Activated B cell treated with CpG ODN at 0.5 μM for 24 hours (primary cell): ENCODE measurements at regions of chr1 and their contacts with region 1.

Region 1: GRCh38 chr1:25074351-25075227 is 144.5 kb upstream of the RUNX3 start:
- DNase-seq: no peak
- ATAC-seq: no peak
- H3K4me3 Mint-ChIP-seq: no peak overlapping the region
- H3K27ac Mint-ChIP-seq: no peak overlapping the region
- H3K4me1 Mint-ChIP-seq: no peaks in the 10 kb centered on the region
- H3K27me3 Mint-ChIP-seq: no peaks in the 10 kb centered on the region
- CTCF ChIP-seq: no peak

Region 2: DNA sequence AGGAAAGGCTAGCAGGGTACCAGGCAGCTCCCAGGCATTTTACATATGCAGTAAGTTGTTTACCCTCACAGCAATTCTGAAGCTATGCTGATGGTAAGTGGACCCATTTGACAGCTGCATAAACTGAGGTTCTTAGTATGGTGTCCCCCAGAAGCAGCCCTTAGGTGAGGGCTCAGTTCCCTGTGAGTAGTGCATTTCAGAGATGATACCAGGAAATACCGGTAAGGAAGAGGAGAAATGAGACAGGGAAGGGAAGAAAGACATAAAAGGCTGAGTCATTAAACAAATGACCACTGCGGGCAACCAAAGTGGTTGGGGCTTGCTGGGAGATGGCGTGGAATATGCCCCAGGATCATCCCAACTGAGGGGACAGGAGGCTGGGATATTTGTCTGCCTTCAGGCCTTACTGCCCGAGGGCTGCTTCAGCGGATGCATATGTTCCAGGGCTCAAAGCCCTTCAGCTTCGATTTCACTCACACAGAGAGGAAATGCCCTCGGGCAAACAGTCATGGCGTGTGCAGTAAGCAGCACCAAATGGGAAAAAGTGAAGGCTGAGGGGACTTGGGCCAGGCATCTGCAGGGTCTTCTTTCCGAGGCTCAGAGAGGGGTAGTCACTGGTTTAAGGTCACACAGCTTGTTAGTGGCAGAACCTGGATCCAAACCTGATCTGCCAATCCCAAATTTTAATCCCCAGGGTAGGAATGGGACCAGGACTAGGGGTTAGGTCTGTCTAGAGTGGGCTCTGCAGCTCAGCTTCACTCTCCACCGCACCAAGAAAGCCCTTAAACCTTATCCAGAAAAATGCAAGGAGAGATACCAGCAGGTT is 10.8 kb before region 1 on chr1:
- CTCF ChIA-PET with region 1: no interaction called
- POLR2A ChIA-PET with region 1: no interaction called
- intact Hi-C with region 1: no loop called
- DNase-seq: no peak
- ATAC-seq: no peak
- H3K4me3 Mint-ChIP-seq: no peak overlapping the region
- H3K27ac Mint-ChIP-seq: no peak overlapping the region
- H3K4me1 Mint-ChIP-seq: peaks cover 10% of the 10 kb centered on the region
- H3K27me3 Mint-ChIP-seq: no peaks in the 10 kb centered on the region
- CTCF ChIP-seq: no peak

Region 3: DNA sequence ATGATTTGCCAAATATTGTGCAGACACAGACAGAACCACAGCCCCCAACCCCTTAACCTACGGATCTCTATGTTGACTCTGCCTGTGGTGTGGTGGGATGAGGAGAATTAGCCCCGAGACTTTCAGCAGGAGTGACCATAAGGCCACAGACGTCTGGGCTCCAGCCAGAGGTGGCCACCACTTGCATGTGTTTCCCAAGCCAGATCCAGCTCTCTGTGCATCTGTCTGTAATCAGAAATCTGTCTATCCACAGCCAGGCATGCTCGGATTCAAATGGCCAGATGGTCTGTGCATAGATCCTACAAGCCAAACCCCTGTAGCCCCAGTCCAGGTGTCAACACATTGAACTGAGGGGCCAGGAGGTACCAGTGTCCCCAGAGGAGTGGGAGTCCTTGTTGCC is 17.1 kb after region 1 on chr1:
- CTCF ChIA-PET with region 1: no interaction called
- POLR2A ChIA-PET with region 1: interaction called, 12 read pairs
- intact Hi-C with region 1: no loop called
- DNase-seq: no peak
- ATAC-seq: no peak
- H3K4me3 Mint-ChIP-seq: no peak overlapping the region
- H3K27ac Mint-ChIP-seq: no peak overlapping the region
- H3K4me1 Mint-ChIP-seq: peaks cover 17% of the 10 kb centered on the region
- H3K27me3 Mint-ChIP-seq: no peaks in the 10 kb centered on the region
- CTCF ChIP-seq: no peak